ENCODE measurements at regions of chr2 and their contacts with region 1.

Region 1: DNA sequence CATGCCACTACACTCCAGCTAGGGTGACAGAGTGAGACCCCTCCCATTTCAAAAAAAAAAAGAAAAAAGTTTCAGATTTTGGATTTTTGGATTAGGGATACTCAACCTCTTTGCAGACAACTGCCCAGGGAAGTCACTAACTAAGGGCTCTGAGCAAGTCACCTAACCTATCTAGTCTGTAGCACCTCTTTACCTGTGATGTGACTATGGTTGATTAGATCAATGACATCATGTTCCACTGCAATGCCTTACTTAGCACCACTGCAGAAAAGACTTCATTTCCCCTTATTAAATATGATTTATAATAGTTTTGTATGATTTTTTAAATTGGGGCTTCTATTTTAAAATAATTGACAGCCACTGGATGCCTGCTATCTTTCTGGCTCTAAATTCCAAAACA is 41.2 kb downstream of the CUL3 start:
- DNase-seq: no peak
- H3K4me3 Mint-ChIP-seq: no peak overlapping the region
- H3K27ac Mint-ChIP-seq: no peak overlapping the region
- H3K4me1 Mint-ChIP-seq: peaks cover 54% of the 10 kb centered on the region
- H3K27me3 Mint-ChIP-seq: no peaks in the 10 kb centered on the region

Region 2: GRCh38 chr2:224532931-224533330 is 11.0 kb before region 1 on chr2:
- CTCF ChIA-PET with region 1: interaction called, 4 read pairs
- intact Hi-C with region 1: loop called (anchors 1 kb)
- DNase-seq: no peak
- H3K4me3 Mint-ChIP-seq: no peak overlapping the region
- H3K27ac Mint-ChIP-seq: peak overlapping the region; percentile 46
- H3K4me1 Mint-ChIP-seq: peaks cover 39% of the 10 kb centered on the region
- H3K27me3 Mint-ChIP-seq: no peaks in the 10 kb centered on the region